Naive thymus-derived CD4-positive, alpha-beta T cell (primary cell): ENCODE measurements at regions of chr2 and their contacts with region 1.

Region 1: GRCh38 chr2:98736464-98736889 is 5.5 kb upstream of the MGAT4A start:
- DNase-seq: peak in 2 of 9 donors; percentile 33 to 37
- ATAC-seq: peak; percentile 16
- H3K4me3 ChIP-seq: peak overlapping the region; percentile 13
- H3K4me3 Mint-ChIP-seq: peak overlapping the region; percentile 30 to 75 (median 54)
- H3K27ac ChIP-seq: peak overlapping the region; percentile 25
- H3K27ac Mint-ChIP-seq: peak overlapping the region; percentile 68 to 93 (median 89)
- H3K4me1 ChIP-seq: peaks cover 35 to 66% of the 10 kb centered on the region in 2 donors
- H3K4me1 Mint-ChIP-seq: peaks cover 46 to 93% (median 87%) of the 10 kb centered on the region in 7 donors
- H3K27me3 ChIP-seq: no peaks in the 10 kb centered on the region
- H3K27me3 Mint-ChIP-seq: no peaks in the 10 kb centered on the region

Region 2: GRCh38 chr2:98479959-98480524 is 256.4 kb before region 1 on chr2:
- CTCF ChIA-PET with region 1: no interaction called
- POLR2A ChIA-PET with region 1: no interaction called
- intact Hi-C with region 1: loop called in 1 of 2 experiments (anchors 2 kb)
- DNase-seq: peak in 1 of 9 donors; percentile 70
- ATAC-seq: peak; percentile 58
- H3K4me3 ChIP-seq: peak overlapping the region; percentile 8
- H3K4me3 Mint-ChIP-seq: peak overlapping the region; percentile 41 to 82 (median 72)
- H3K27ac ChIP-seq: peak overlapping the region; percentile 64
- H3K27ac Mint-ChIP-seq: peak overlapping the region; percentile 81 to 95 (median 91)
- H3K4me1 ChIP-seq: peaks cover 87 to 97% of the 10 kb centered on the region in 2 donors
- H3K4me1 Mint-ChIP-seq: peaks cover 80 to 100% (median 98%) of the 10 kb centered on the region in 7 donors
- H3K27me3 ChIP-seq: no peaks in the 10 kb centered on the region
- H3K27me3 Mint-ChIP-seq: no peaks in the 10 kb centered on the region

Region 3: GRCh38 chr2:98726205-98726604 is 10.3 kb before region 1 on chr2:
- CTCF ChIA-PET with region 1: interaction called, 3 read pairs
- POLR2A ChIA-PET with region 1: interaction called, 99 read pairs
- intact Hi-C with region 1: no loop called
- DNase-seq: peak in 1 of 9 donors; percentile 35
- ATAC-seq: no peak
- H3K4me3 ChIP-seq: peak overlapping the region; percentile 79
- H3K4me3 Mint-ChIP-seq: peak overlapping the region; percentile 78 to 97 (median 86)
- H3K27ac ChIP-seq: peak overlapping the region; percentile 81
- H3K27ac Mint-ChIP-seq: peak overlapping the region; percentile 41 to 96 (median 90)
- H3K4me1 ChIP-seq: peaks cover 38 to 46% of the 10 kb centered on the region in 2 donors
- H3K4me1 Mint-ChIP-seq: peaks cover 29 to 74% (median 65%) of the 10 kb centered on the region in 7 donors
- H3K27me3 ChIP-seq: no peaks in the 10 kb centered on the region
- H3K27me3 Mint-ChIP-seq: no peaks in the 10 kb centered on the region

Region 4: GRCh38 chr2:98749066-98749450 is 12.6 kb after region 1 on chr2:
- CTCF ChIA-PET with region 1: interaction called, 7 read pairs
- POLR2A ChIA-PET with region 1: interaction called, 28 read pairs
- intact Hi-C with region 1: no loop called
- DNase-seq: no peak
- ATAC-seq: peak; percentile 95
- H3K4me3 ChIP-seq: no peak overlapping the region
- H3K4me3 Mint-ChIP-seq: peak overlapping the region in 3 of 10 donors; percentile 12 to 26 (median 18)
- H3K27ac ChIP-seq: no peak overlapping the region
- H3K27ac Mint-ChIP-seq: peak overlapping the region in 6 of 9 donors; percentile 2 to 52 (median 36)
- H3K4me1 ChIP-seq: peaks cover 11 to 25% of the 10 kb centered on the region in 2 donors
- H3K4me1 Mint-ChIP-seq: peaks cover 30 to 70% (median 64%) of the 10 kb centered on the region in 7 donors
- H3K27me3 ChIP-seq: no peaks in the 10 kb centered on the region
- H3K27me3 Mint-ChIP-seq: no peaks in the 10 kb centered on the region

Region 5: DNA sequence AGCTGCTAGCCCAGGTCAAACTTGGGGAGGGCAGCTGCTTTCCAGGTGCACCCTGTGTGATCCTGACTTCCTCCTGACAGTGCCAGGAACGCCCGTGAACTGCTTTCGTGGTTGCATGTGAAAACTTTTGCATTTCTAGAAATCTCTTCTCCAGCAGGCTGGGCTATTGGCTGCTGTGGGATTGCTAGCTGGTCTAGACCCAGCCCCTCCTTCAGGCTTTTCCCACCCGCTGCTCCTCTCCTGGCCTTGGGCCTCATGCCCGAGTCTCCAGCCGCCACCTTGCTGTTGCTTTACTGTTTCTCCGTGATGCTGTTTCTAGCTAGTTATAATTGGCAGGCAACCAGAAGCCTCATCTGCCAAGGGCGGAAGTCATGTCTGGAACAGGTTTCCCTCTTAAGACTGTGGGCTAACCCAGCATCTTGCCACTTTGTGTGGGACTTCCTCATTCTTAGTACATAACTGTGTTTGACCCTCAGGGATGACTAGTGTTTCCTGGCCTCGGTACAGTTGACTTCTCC is 21.5 kb after region 1 on chr2:
- CTCF ChIA-PET with region 1: interaction called, 17 read pairs
- POLR2A ChIA-PET with region 1: interaction called, 310 read pairs
- intact Hi-C with region 1: loop called (anchors 1 kb)
- DNase-seq: peak in 8 of 9 donors; percentile 46 to 79 (median 74)
- ATAC-seq: peak; percentile 89
- H3K4me3 ChIP-seq: peak overlapping the region; percentile 46
- H3K4me3 Mint-ChIP-seq: peak overlapping the region; percentile 79 to 98 (median 85)
- H3K27ac ChIP-seq: peak overlapping the region; percentile 70
- H3K27ac Mint-ChIP-seq: peak overlapping the region; percentile 91 to 100 (median 97)
- H3K4me1 ChIP-seq: peaks cover 45 to 70% of the 10 kb centered on the region in 2 donors
- H3K4me1 Mint-ChIP-seq: peaks cover 56 to 97% (median 80%) of the 10 kb centered on the region in 7 donors
- H3K27me3 ChIP-seq: no peaks in the 10 kb centered on the region
- H3K27me3 Mint-ChIP-seq: no peaks in the 10 kb centered on the region

Region 6: DNA sequence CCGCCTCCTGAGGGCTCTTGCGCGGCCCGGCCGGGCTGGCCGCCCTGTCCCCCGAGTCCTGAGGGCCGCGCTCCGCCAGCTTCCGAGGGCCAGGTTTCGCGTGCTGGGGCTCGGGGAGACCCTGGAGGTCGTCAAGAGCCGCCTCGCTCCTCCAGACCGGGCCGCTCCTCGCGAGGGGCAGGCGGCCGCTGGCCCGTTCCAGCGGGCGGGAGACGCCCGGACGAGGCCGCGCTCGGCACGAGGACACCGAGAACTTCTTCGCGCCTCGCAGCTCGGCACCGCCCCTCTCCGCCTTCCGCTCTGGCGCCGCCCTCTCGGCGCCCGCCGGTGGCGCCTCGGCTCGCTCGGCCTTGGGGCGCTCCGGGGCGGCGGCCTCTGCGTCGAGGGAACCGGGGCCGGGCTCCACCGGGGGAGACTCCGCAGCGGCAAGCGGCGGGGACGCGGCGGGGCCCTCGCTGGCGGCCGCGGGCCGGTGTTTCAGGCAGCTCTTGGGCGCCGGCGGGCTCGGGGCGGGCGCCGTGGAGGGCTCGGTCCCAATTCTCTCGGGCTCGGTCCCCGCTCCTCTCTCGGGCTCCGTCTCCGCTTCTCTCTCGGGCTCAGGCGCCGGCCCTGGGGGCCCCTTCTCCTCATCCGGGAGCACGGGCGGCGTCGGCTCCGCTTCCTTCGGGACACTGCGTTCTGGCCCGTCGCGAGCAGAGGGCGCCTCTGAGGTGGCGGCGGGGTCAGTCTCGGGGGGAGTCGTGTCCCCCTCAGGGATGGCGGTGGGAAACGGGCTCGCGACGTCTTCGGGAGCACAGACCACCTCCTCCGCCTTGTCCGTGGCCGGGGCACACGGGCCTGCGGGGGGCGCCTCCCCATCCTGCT is 86.1 kb after region 1 on chr2:
- CTCF ChIA-PET with region 1: no interaction called
- POLR2A ChIA-PET with region 1: interaction called, 40 read pairs
- intact Hi-C with region 1: loop called in 1 of 2 experiments (anchors 2 kb)
- DNase-seq: peak; percentile 49 to 78 (median 66)
- ATAC-seq: peak; percentile 94
- H3K4me3 ChIP-seq: peak overlapping the region; percentile 43
- H3K4me3 Mint-ChIP-seq: peak overlapping the region in 9 of 10 donors; percentile 24 to 63 (median 45)
- H3K27ac ChIP-seq: peak overlapping the region; percentile 66
- H3K27ac Mint-ChIP-seq: no peak overlapping the region
- H3K4me1 ChIP-seq: peaks cover 0 to under 1% of the 10 kb centered on the region in 2 donors
- H3K4me1 Mint-ChIP-seq: peaks cover 19 to 40% (median 25%) of the 10 kb centered on the region in 7 donors
- H3K27me3 ChIP-seq: no peaks in the 10 kb centered on the region
- H3K27me3 Mint-ChIP-seq: peaks cover 0 to 9% (median 0%) of the 10 kb centered on the region in 5 donors